Activated CD4-positive, alpha-beta T cell treated with anti-CD3 and anti-CD28 coated beads for 36 hours (primary cell): ENCODE measurements at regions of chr4 and their contacts with region 1.

Region 1: GRCh38 chr4:163166041-163166579 is 580 bp downstream of the NAF1 start:
- DNase-seq: peak; percentile 73
- ATAC-seq: peak; percentile 65
- H3K4me3 Mint-ChIP-seq: peak overlapping the region; percentile 81
- H3K27ac Mint-ChIP-seq: peak overlapping the region; percentile 89
- H3K4me1 Mint-ChIP-seq: peaks cover 44% of the 10 kb centered on the region
- H3K27me3 Mint-ChIP-seq: no peaks in the 10 kb centered on the region

Region 2: GRCh38 chr4:162921178-162921785 is 244.8 kb before region 1 on chr4:
- CTCF ChIA-PET with region 1: no interaction called
- POLR2A ChIA-PET with region 1: no interaction called
- intact Hi-C with region 1: no loop called
- DNase-seq: no peak
- ATAC-seq: no peak
- H3K4me3 Mint-ChIP-seq: no peak overlapping the region
- H3K27ac Mint-ChIP-seq: no peak overlapping the region
- H3K4me1 Mint-ChIP-seq: no peaks in the 10 kb centered on the region
- H3K27me3 Mint-ChIP-seq: no peaks in the 10 kb centered on the region

Region 3: GRCh38 chr4:163148466-163149336 is 17.4 kb before region 1 on chr4:
- CTCF ChIA-PET with region 1: no interaction called
- POLR2A ChIA-PET with region 1: no interaction called
- intact Hi-C with region 1: loop called in 1 of 2 experiments (anchors 2 kb)
- DNase-seq: no peak
- ATAC-seq: no peak
- H3K4me3 Mint-ChIP-seq: no peak overlapping the region
- H3K27ac Mint-ChIP-seq: no peak overlapping the region
- H3K4me1 Mint-ChIP-seq: peaks cover 17% of the 10 kb centered on the region
- H3K27me3 Mint-ChIP-seq: no peaks in the 10 kb centered on the region

Region 4: DNA sequence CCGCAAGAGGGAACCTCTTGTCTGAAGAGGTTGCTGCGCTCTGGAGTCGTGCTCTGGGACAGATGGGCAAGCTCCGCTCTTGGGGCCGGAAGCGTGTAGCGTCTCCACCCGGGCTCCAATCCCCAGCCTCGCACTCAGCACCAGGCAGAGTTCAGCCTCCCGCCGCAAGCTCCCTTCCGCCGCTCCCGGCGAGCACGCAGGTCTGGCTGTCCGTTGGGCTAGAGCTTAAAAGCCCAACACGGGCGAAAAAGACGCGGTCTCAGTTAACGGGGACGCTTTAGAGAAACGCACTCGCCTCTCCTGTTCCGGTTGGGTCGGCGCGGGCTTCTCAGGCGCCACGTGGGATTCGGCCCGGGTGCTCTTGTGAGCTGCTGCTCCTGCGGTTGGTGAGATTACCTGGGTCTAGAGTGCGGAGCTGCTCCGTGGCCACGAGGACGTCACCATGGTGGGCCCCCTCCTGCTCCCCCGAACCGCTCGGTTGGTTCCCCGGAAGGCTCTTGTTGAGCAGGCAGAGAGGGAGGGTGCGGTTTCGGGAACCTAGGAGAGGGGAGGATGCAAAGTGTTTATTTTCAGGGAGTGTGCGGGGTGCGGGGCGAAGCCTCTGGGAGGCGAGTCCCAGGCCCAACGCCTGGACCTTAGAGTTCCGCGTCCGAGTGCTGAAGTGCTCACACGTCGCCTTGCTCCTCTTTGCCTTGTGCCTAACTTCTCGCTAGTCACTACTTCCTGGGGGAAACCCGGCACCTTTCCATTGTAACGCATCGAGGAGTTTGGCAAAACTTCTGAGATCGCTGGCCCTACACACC is 328.5 kb after region 1 on chr4 and contains the start of gene TMA16:
- CTCF ChIA-PET with region 1: no interaction called
- POLR2A ChIA-PET with region 1: no interaction called
- intact Hi-C with region 1: loop called (anchors 1 to 2 kb)
- DNase-seq: peak; percentile 92
- ATAC-seq: peak; percentile 91
- H3K4me3 Mint-ChIP-seq: peak within 1 kb of the TSS; percentile 99
- H3K27ac Mint-ChIP-seq: peak within 1 kb of the TSS; percentile 100
- H3K4me1 Mint-ChIP-seq: peaks cover 27% of the 10 kb centered on the region
- H3K27me3 Mint-ChIP-seq: no peaks in the 10 kb centered on the region
- total RNA-seq, gene TMA16: 54.7 to 63.6 TPM

Region 5: GRCh38 chr4:163587867-163588266 is 421.8 kb after region 1 on chr4:
- CTCF ChIA-PET with region 1: no interaction called
- POLR2A ChIA-PET with region 1: no interaction called
- intact Hi-C with region 1: no loop called
- DNase-seq: peak; percentile 6
- ATAC-seq: peak; percentile 55
- H3K4me3 Mint-ChIP-seq: no peak overlapping the region
- H3K27ac Mint-ChIP-seq: no peak overlapping the region
- H3K4me1 Mint-ChIP-seq: peaks cover 8% of the 10 kb centered on the region
- H3K27me3 Mint-ChIP-seq: no peaks in the 10 kb centered on the region